Activated naive CD4-positive, alpha-beta T cell treated with anti-CD3 and anti-CD28 coated beads for 36 hours (primary cell): ENCODE measurements at regions of chr13 and their contacts with region 1.

Region 1: GRCh38 chr13:102580552-102581169 is 16.1 kb upstream of the TPP2 start:
- DNase-seq: peak; percentile 53
- H3K4me3 Mint-ChIP-seq: no peak overlapping the region
- H3K27ac Mint-ChIP-seq: no peak overlapping the region
- H3K4me1 Mint-ChIP-seq: peaks cover 5% of the 10 kb centered on the region
- H3K27me3 Mint-ChIP-seq: peaks cover 3% of the 10 kb centered on the region

Region 2: GRCh38 chr13:102724923-102725322 is 144.3 kb after region 1 on chr13:
- CTCF ChIA-PET with region 1: interaction called, 6 read pairs
- intact Hi-C with region 1: loop called (anchors 1 kb)
- DNase-seq: peak; percentile 9
- H3K4me3 Mint-ChIP-seq: no peak overlapping the region
- H3K27ac Mint-ChIP-seq: no peak overlapping the region
- H3K4me1 Mint-ChIP-seq: no peaks in the 10 kb centered on the region
- H3K27me3 Mint-ChIP-seq: peaks cover 4% of the 10 kb centered on the region

Region 3: GRCh38 chr13:102870677-102871415 is 290.2 kb after region 1 on chr13:
- CTCF ChIA-PET with region 1: interaction called, 10 read pairs
- intact Hi-C with region 1: no loop called
- DNase-seq: peak; percentile 56
- H3K4me3 Mint-ChIP-seq: no peak overlapping the region
- H3K27ac Mint-ChIP-seq: no peak overlapping the region
- H3K4me1 Mint-ChIP-seq: peaks cover 22% of the 10 kb centered on the region
- H3K27me3 Mint-ChIP-seq: no peaks in the 10 kb centered on the region

Region 4: DNA sequence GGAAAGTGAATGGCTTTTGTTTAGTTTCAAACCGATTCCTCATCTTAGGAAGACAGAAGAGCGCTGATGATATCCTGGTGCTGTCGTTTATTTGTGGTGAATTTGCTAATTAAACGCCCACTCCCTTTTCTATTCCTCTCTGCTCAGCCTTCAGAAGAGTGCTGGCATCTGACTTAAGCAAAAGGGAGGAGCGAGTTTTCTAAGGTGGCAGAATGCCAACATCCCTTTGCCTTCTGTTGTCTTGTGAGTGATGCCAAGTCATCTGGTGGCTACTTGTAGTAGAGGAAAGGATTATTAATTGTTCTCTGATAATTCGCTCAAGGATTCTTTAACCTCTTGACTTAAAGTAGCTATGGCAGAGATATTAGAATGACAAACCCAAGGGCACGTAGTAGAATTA is 333.3 kb after region 1 on chr13:
- CTCF ChIA-PET with region 1: interaction called, 4 read pairs
- intact Hi-C with region 1: loop called (anchors 5 kb)
- DNase-seq: no peak
- H3K4me3 Mint-ChIP-seq: no peak overlapping the region
- H3K27ac Mint-ChIP-seq: no peak overlapping the region
- H3K4me1 Mint-ChIP-seq: no peaks in the 10 kb centered on the region
- H3K27me3 Mint-ChIP-seq: peaks cover 23% of the 10 kb centered on the region

Region 5: GRCh38 chr13:103140001-103140671 is 559.5 kb after region 1 on chr13:
- CTCF ChIA-PET with region 1: interaction called, 3 read pairs
- intact Hi-C with region 1: loop called (anchors 10 kb)
- DNase-seq: no peak
- H3K4me3 Mint-ChIP-seq: no peak overlapping the region
- H3K27ac Mint-ChIP-seq: no peak overlapping the region
- H3K4me1 Mint-ChIP-seq: no peaks in the 10 kb centered on the region
- H3K27me3 Mint-ChIP-seq: no peaks in the 10 kb centered on the region